CD8-positive, alpha-beta memory T cell (primary cell): ENCODE measurements at regions of chr11 and their contacts with region 1.

Region 1: DNA sequence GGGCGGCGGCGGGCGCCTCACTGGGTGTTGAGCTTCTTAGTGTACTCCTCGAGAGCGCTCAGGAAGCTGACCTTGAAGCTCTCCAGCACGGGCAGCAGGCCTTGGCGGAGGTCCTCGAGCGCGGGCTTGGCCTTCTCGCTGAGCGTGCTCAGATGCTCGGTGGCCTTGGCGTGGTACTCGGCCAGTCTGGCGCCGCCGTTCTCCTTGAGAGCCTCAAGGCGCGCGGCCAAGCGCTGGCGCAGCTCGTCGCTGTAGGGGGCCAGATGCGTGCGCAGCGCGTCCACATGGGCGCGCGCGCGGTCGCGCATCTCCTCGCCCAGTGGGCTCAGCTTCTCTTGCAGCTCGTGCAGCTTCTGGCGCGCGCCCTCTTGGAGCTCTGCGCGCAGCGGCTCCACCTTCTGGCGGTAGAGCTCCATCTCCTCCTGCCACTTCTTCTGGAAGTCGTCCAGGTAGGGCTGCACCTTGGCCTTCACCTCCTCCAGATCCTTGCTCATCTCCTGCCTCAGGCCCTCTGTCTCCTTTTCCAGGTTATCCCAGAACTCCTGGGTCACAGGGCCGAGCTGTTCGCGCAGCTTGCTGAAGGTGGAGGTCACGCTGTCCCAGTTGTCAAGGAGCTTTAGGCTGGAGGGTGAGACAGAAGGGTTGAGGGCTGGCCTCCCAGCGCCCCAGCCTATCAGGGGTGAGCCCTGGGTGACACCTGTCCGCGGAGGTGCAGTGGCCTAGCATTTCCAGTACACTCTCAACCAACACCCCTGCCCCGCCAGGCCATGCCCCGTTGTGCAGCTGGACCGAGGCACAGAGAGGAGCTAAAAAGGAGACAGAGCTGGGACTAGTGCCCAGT is 1.4 kb downstream of the APOA1 start:
- DNase-seq: peak; percentile 64 to 89 (median 79)
- H3K4me3 ChIP-seq: peak overlapping the region; percentile 78
- H3K4me3 Mint-ChIP-seq: peak overlapping the region; percentile 79 to 93 (median 82)
- H3K27ac ChIP-seq: peak overlapping the region; percentile 31
- H3K27ac Mint-ChIP-seq: peak overlapping the region; percentile 29 to 81 (median 61)
- H3K4me1 ChIP-seq: peaks cover 7% of the 10 kb centered on the region
- H3K4me1 Mint-ChIP-seq: peaks cover 5 to 28% (median 9%) of the 10 kb centered on the region in 3 donors
- H3K27me3 ChIP-seq: no peaks in the 10 kb centered on the region
- H3K27me3 Mint-ChIP-seq: peaks cover 0 to 1% of the 10 kb centered on the region in 2 donors

Region 2: GRCh38 chr11:116787786-116788486 is 48.1 kb before region 1 on chr11 and contains the start of gene ZPR1:
- CTCF ChIA-PET with region 1: interaction called, 101 read pairs
- POLR2A ChIA-PET with region 1: interaction called, 17 read pairs
- DNase-seq: peak; percentile 82 to 91 (median 85)
- H3K4me3 ChIP-seq: peak within 1 kb of the TSS; percentile 93
- H3K4me3 Mint-ChIP-seq: peak within 1 kb of the TSS; percentile 93 to 100 (median 97)
- H3K27ac ChIP-seq: peak within 1 kb of the TSS; percentile 96
- H3K27ac Mint-ChIP-seq: peak within 1 kb of the TSS; percentile 88 to 99 (median 98)
- H3K4me1 ChIP-seq: peaks cover 29% of the 10 kb centered on the region
- H3K4me1 Mint-ChIP-seq: peaks cover 46 to 69% (median 57%) of the 10 kb centered on the region in 3 donors
- H3K27me3 ChIP-seq: no peaks in the 10 kb centered on the region
- H3K27me3 Mint-ChIP-seq: no peaks in the 10 kb centered on the region
- total RNA-seq, gene ZPR1: 118 to 124 TPM

Region 3: GRCh38 chr11:116853461-116854073 is 17.6 kb after region 1 on chr11:
- CTCF ChIA-PET with region 1: interaction called, 59 read pairs
- POLR2A ChIA-PET with region 1: interaction called, 28 read pairs
- DNase-seq: peak; percentile 27 to 80 (median 70)
- H3K4me3 ChIP-seq: peak overlapping the region; percentile 27
- H3K4me3 Mint-ChIP-seq: peak overlapping the region; percentile 29 to 85 (median 74)
- H3K27ac ChIP-seq: peak overlapping the region; percentile 68
- H3K27ac Mint-ChIP-seq: peak overlapping the region; percentile 83 to 99 (median 92)
- H3K4me1 ChIP-seq: peaks cover 73% of the 10 kb centered on the region
- H3K4me1 Mint-ChIP-seq: peaks cover 73 to 81% (median 78%) of the 10 kb centered on the region in 3 donors
- H3K27me3 ChIP-seq: no peaks in the 10 kb centered on the region
- H3K27me3 Mint-ChIP-seq: peaks cover 0 to 2% of the 10 kb centered on the region in 2 donors

Region 4: DNA sequence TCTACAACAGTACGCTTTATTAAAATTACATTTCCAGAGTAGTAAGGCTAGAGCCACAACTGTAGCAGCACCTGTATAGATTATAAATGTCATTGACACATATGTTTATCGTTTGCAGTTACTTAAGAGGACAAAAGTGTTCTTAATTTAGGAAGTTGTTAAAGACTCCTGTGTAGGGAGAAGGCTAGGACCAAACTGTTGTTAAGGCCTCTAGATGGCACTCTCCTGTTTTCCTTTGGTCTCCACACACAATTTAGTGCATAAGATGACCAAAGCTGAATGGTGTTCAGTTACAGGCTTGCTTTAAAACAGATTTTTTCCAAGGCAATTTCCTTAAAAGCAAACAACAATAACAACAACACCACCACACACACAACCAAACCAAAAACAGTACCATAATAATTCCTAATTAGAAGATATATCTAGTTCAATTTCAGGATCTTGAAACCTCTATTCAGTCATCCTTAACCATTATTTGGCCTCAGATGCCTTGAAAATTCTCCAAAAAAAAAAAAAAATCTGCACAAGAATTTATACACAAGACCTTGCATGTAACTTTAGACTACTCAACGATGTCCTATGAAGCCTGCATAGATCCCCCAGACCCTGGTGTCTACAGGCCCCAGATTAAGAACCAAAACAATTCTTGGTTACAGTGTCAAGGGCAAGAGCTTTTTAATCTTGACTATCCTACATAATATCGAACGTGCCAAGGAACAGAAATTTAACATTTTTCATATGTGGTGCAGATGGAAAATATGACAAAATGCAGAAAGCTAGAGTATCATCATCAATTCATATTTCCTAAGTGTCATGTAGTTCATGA is 44.0 kb after region 1 on chr11:
- CTCF ChIA-PET with region 1: interaction called, 13 read pairs
- POLR2A ChIA-PET with region 1: no interaction called
- DNase-seq: peak in 2 of 5 donors; percentile 29 to 47
- H3K4me3 ChIP-seq: no peak overlapping the region
- H3K4me3 Mint-ChIP-seq: no peak overlapping the region
- H3K27ac ChIP-seq: no peak overlapping the region
- H3K27ac Mint-ChIP-seq: peak overlapping the region in 6 of 8 donors; percentile 31 to 82 (median 71)
- H3K4me1 ChIP-seq: no peaks in the 10 kb centered on the region
- H3K4me1 Mint-ChIP-seq: peaks cover 9 to 20% (median 13%) of the 10 kb centered on the region in 3 donors
- H3K27me3 ChIP-seq: no peaks in the 10 kb centered on the region
- H3K27me3 Mint-ChIP-seq: peaks cover 0 to 1% of the 10 kb centered on the region in 2 donors

Region 5: GRCh38 chr11:117098269-117099232 is 262.5 kb after region 1 on chr11 and contains the start of gene SIK3:
- CTCF ChIA-PET with region 1: interaction called, 13 read pairs
- POLR2A ChIA-PET with region 1: interaction called, 6 read pairs
- DNase-seq: peak; percentile 94 to 96 (median 94)
- H3K4me3 ChIP-seq: peak within 1 kb of the TSS; percentile 87
- H3K4me3 Mint-ChIP-seq: peak within 1 kb of the TSS; percentile 90 to 99 (median 97)
- H3K27ac ChIP-seq: peak within 1 kb of the TSS; percentile 99
- H3K27ac Mint-ChIP-seq: peak within 1 kb of the TSS; percentile 99 to 100 (median 100)
- H3K4me1 ChIP-seq: peaks cover 44% of the 10 kb centered on the region
- H3K4me1 Mint-ChIP-seq: peaks cover 58 to 61% (median 59%) of the 10 kb centered on the region in 3 donors
- H3K27me3 ChIP-seq: no peaks in the 10 kb centered on the region
- H3K27me3 Mint-ChIP-seq: peaks cover 0 to 2% of the 10 kb centered on the region in 2 donors
- total RNA-seq, gene SIK3: 42.8 to 48.7 TPM

Region 6: GRCh38 chr11:117226388-117227385 is 390.7 kb after region 1 on chr11:
- CTCF ChIA-PET with region 1: interaction called, 11 read pairs
- POLR2A ChIA-PET with region 1: no interaction called
- DNase-seq: peak; percentile 22 to 65 (median 62)
- H3K4me3 ChIP-seq: no peak overlapping the region
- H3K4me3 Mint-ChIP-seq: peak overlapping the region in 5 of 7 donors; percentile 36 to 53 (median 50)
- H3K27ac ChIP-seq: no peak overlapping the region
- H3K27ac Mint-ChIP-seq: peak overlapping the region; percentile 35 to 90 (median 78)
- H3K4me1 ChIP-seq: peaks cover 33% of the 10 kb centered on the region
- H3K4me1 Mint-ChIP-seq: peaks cover 39 to 55% (median 46%) of the 10 kb centered on the region in 3 donors
- H3K27me3 ChIP-seq: no peaks in the 10 kb centered on the region
- H3K27me3 Mint-ChIP-seq: no peaks in the 10 kb centered on the region